Ascending aorta (tissue), 2 donors: ENCODE measurements at regions of chr22 and their contacts with region 1.

Region 1: GRCh38 chr22:38793721-38794466 is at the start of gene DNAL4:
- DNase-seq: peak; percentile 92 to 98
- H3K4me3 ChIP-seq: peak within 1 kb of the TSS; percentile 51 to 70
- H3K27ac ChIP-seq: peak within 1 kb of the TSS; percentile 75 to 80
- H3K4me1 ChIP-seq: peaks cover 0 to 7% of the 10 kb centered on the region in 2 donors
- H3K27me3 ChIP-seq: no peaks in the 10 kb centered on the region
- CTCF ChIP-seq: no peak
- total RNA-seq, gene DNAL4: 18.0 TPM

Region 2: DNA sequence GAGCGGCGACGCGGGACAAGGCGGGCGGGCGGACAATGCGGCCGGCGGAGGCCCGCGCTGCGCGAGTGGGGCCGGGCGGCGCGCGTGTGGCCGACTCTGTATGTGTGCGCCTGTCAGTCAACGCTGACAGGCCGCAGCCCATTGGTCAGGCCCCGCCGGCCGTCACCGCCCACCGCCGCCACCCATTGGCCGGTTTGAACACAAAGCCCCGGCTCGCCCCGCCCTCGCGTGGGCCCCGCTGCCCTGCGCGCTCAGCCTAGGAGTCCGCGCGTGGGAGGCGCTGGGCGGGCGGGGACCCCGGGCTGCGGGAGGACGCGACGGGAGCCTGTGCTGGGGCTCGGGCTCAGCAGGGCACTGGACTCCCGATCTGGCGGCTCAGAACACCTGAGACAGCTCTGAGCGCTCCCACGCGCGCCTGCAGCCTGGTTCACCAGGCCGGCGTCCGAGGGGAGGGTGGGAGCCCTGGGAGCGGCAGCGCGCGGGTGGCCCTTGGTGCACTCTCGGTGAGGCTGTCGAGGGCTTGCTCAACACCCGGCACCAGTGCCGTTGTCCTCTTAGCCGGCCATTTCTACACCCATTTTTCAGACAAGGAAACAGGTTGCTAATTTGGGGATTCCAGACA is 37.9 kb before region 1 on chr22 and contains the start of gene SUN2:
- intact Hi-C with region 1: loop called (anchors 2 kb)
- DNase-seq: peak; percentile 86 to 97
- H3K4me3 ChIP-seq: peak within 1 kb of the TSS; percentile 72 to 79
- H3K27ac ChIP-seq: peak within 1 kb of the TSS; percentile 91 to 98
- H3K4me1 ChIP-seq: peaks cover 17 to 23% of the 10 kb centered on the region in 2 donors
- H3K27me3 ChIP-seq: no peaks in the 10 kb centered on the region
- CTCF ChIP-seq: no peak
- total RNA-seq, gene SUN2: 896 TPM

Region 3: GRCh38 chr22:38843201-38843715 is 49.4 kb after region 1 on chr22:
- intact Hi-C with region 1: loop called (anchors 2 kb)
- DNase-seq: no peak
- H3K4me3 ChIP-seq: peak overlapping the region; percentile 79 to 94
- H3K27ac ChIP-seq: peak overlapping the region; percentile 79 to 89
- H3K4me1 ChIP-seq: peaks cover 0 to 29% of the 10 kb centered on the region in 2 donors
- H3K27me3 ChIP-seq: no peaks in the 10 kb centered on the region
- CTCF ChIP-seq: peak in 2 of 3 experiments; percentile 25 to 54

Region 4: DNA sequence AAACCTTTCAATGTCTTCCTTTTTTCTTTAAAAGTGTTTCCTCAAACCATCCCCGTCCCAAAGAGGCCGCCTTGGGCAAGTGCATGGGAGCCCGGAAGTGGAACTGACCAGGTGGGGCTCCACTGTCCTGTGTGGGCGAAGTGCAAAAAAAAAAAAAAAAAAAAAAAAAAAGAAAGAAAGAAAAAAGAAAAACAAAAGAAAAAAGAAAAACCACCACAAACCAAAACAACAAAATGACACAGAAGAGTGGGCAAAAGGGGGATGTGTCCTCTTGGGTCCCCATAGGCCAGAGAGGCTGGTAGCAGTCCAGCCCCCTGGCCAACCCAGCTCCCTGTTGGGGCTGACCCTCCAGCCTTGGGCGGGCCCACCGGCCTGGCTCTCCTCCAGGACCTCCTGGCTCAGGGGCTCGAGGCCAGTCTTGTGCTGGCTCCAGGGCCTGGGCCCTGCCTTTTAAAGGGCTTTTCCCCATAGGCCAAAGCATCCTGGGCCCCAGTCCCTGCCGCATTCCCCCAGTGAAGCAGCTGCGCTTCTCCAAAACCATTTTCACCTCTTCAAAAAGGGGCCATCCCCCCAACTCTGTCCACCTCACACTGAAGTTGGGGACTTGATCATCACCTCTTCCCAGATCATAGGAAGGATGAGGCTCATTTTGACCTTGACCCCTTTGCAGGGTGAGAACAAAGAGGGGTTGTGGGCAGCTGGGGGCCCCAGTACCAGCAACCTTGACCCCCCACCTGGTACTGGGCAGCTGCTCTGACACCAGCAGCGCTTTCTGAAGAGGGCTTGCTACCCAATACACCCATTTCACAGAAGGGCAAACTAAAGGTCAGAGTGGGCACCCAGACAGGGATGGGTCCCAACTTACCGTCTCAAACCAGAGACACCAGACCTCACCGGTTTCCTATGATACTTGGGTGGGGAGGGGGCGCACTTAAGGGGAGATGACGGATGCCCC is 68.8 kb after region 1 on chr22:
- intact Hi-C with region 1: loop called (anchors 5 kb)
- DNase-seq: peak in 1 of 2 donors; percentile 85
- H3K4me3 ChIP-seq: no peak overlapping the region
- H3K27ac ChIP-seq: no peak overlapping the region
- H3K4me1 ChIP-seq: peaks cover 20 to 50% of the 10 kb centered on the region in 2 donors
- H3K27me3 ChIP-seq: no peaks in the 10 kb centered on the region
- CTCF ChIP-seq: no peak